ENCODE measurements at regions of chr10 and their contacts with region 1.

Region 1: DNA sequence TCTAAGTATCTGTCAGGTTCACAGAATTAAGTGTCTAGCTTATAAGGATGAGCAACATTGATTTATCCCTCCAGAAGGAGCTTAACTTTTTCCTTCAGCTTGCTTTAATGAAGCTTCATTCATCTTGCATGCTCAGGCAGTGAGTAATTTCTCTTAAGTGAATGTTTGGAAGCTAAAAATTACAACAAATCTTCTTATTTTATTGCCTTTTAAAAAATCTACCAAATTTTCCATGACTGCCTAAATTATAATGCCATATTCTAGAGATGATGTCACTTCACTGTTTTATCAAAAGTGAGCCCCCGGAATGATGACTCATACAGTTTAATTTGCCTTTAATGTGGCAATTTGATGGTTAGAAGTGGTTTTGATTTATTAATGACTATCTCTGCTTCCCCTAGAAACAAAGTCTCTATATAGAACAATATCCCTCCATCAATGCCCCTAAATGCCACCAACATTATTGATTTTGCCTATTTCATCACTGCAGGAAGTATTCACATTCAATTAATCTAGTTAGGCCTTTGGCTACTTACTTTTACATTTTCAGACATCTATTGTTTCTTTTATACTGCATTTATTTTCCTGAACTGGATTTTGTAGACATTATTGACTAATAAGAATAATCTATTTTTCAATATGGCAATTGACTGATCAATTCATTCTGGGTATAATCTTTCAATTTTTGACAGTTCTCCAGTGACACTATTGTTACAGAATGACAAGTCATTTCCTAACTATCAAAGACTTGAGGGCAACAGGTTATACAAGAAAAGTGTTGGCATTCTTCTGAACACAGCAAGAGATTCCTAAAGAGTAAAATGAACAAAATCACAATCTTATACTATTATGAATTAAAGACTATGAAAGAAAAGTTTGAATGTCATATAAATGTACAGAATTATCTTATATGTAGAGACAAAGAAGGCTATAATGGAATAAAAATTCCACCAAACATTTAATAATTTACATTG is 139.3 kb upstream of the ODAD2 start:
- DNase-seq: peak; percentile 86
- H3K4me3 ChIP-seq: no peak overlapping the region
- H3K27ac ChIP-seq: no peak overlapping the region
- H3K4me1 ChIP-seq: no peaks in the 10 kb centered on the region
- H3K27me3 ChIP-seq: no peaks in the 10 kb centered on the region
- CTCF ChIP-seq: no peak

Region 2: DNA sequence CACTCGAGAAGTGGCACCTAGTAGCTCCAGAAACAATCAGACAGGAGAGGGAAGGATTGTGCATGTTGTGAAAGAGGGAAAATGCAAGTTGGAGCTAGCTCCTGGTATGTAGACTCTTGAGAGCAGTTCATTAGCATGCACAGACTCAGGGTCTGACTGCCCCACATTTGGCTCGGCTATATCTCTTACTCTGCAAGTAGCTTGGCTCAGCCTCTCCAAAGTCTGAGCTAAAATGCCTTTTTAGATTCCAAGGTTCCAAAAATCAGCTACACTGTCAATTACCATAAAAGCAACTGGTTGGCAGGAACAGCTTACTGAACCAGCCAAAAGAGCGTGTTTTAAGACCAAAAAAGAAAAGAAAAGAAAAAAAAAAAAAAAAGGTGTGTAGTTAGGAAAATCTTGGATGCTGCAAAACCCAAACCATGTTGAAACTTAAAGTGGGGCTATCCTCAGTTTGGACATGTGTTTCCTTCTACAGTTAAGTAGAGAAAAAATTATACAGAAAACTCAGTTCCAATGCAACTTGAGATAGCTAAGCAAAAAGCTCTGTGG is 458.1 kb before region 1 on chr10:
- CTCF ChIA-PET with region 1: no interaction called
- POLR2A ChIA-PET with region 1: no interaction called
- intact Hi-C with region 1: no loop called
- DNase-seq: no peak
- H3K4me3 ChIP-seq: no peak overlapping the region
- H3K27ac ChIP-seq: no peak overlapping the region
- H3K4me1 ChIP-seq: no peaks in the 10 kb centered on the region
- H3K27me3 ChIP-seq: peaks cover 9% of the 10 kb centered on the region
- CTCF ChIP-seq: no peak

Region 3: DNA sequence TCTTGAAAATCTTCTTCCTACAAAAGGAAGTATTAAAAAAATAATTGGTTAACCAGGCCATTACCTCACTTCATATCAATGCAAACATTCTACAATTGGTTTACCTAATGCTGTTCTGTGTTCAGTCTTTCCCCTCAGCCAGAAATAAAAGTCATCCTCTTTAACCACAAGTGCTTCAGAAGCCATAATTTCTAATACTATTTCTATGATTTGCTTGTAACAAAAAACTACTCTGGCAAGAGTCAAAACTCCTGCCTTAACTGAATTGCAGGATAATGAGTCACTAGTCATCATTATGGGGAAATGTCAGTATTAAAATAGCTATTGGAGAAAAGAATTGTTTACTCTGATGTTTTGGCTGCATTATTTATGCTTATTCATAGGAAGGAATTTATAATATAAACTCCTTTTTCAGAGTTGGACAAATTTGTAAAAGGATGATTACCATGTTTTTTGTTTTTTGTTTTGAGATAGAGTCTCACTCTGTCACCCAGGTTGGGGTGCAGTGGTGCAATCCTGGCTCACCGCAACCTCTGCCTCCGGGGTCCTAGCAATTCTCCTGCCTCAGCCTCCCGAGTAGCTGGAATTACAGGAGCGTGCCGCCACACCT is 83.9 kb before region 1 on chr10:
- CTCF ChIA-PET with region 1: no interaction called
- POLR2A ChIA-PET with region 1: no interaction called
- intact Hi-C with region 1: loop called (anchors 5 kb)
- DNase-seq: peak; percentile 30
- H3K4me3 ChIP-seq: no peak overlapping the region
- H3K27ac ChIP-seq: no peak overlapping the region
- H3K4me1 ChIP-seq: no peaks in the 10 kb centered on the region
- H3K27me3 ChIP-seq: no peaks in the 10 kb centered on the region
- CTCF ChIP-seq: no peak

Region 4: GRCh38 chr10:28312572-28312971 is 174.4 kb after region 1 on chr10:
- CTCF ChIA-PET with region 1: no interaction called
- POLR2A ChIA-PET with region 1: no interaction called
- intact Hi-C with region 1: no loop called
- DNase-seq: peak; percentile 60
- H3K4me3 ChIP-seq: no peak overlapping the region
- H3K27ac ChIP-seq: no peak overlapping the region
- H3K4me1 ChIP-seq: no peaks in the 10 kb centered on the region
- H3K27me3 ChIP-seq: peaks cover 9% of the 10 kb centered on the region
- CTCF ChIP-seq: no peak